Left ventricle myocardium inferior (tissue), 1 donor: ENCODE measurements at regions of chr1 and their contacts with region 1.

Region 1: GRCh38 chr1:229258031-229258756 is 12.7 kb upstream of the RAB4A start:
- DNase-seq: peak; percentile 26
- H3K4me3 ChIP-seq: no peak overlapping the region
- H3K27ac ChIP-seq: no peak overlapping the region
- H3K4me1 ChIP-seq: peaks cover 6% of the 10 kb centered on the region
- H3K27me3 ChIP-seq: no peaks in the 10 kb centered on the region
- CTCF ChIP-seq: peak; percentile 89

Region 2: GRCh38 chr1:229300099-229300757 is 42.0 kb after region 1 on chr1:
- intact Hi-C with region 1: no loop called
- DNase-seq: no peak
- H3K4me3 ChIP-seq: no peak overlapping the region
- H3K27ac ChIP-seq: no peak overlapping the region
- H3K4me1 ChIP-seq: peaks cover 16% of the 10 kb centered on the region
- H3K27me3 ChIP-seq: no peaks in the 10 kb centered on the region
- CTCF ChIP-seq: no peak

Region 3: DNA sequence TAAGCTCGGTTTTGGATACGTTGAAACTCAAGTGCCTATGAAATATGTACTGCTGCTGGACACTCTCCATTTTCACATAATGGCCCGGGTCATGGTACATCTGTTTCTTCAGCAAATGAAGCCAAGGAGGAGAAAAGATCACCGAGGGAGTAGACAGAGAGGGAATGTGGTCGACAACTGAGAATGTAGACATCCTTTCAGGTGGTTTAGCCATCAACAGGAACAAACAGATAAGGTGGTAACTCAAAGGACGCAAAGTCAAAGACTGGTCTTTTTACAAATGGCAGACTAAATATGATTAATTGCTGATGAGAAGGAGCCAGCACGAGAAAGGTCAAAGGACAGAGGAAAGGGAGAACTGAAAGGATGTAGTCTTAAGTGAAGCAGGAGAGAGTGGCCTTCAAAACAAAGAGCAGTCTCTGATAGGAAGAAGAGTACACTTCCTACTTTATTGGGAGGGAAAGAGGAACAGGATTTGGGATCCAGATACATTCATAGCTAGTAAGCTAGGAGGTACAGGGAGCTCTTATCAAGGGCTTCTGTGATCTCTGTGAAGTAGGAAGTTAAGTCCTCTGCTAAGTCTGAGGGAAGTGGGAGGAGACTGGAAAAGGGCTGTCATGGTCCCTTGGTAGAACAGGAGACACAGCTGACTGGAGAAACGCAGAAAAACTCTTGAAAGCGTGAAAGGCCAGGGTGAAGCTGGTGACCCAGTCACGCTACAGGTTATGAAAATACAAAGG is 221.6 kb after region 1 on chr1:
- intact Hi-C with region 1: loop called (anchors 5 kb)
- DNase-seq: no peak
- H3K4me3 ChIP-seq: no peak overlapping the region
- H3K27ac ChIP-seq: no peak overlapping the region
- H3K4me1 ChIP-seq: peaks cover 5% of the 10 kb centered on the region
- H3K27me3 ChIP-seq: no peaks in the 10 kb centered on the region
- CTCF ChIP-seq: no peak